ENCODE measurements at regions of chr7 and their contacts with region 1.

Region 1: GRCh38 chr7:128425850-128426249 is 16.1 kb upstream of the IMPDH1 start:
- DNase-seq: peak; percentile 32
- H3K4me3 ChIP-seq: no peak overlapping the region
- H3K27ac ChIP-seq: no peak overlapping the region
- H3K4me1 ChIP-seq: peaks cover 3% of the 10 kb centered on the region
- H3K27me3 ChIP-seq: no peaks in the 10 kb centered on the region
- CTCF ChIP-seq: peak; percentile 92 to 98

Region 2: GRCh38 chr7:128398016-128398840 is 27.6 kb before region 1 on chr7:
- CTCF ChIA-PET with region 1: interaction called, 5 read pairs
- dilution Hi-C with region 1: no loop called
- in situ Hi-C with region 1: no loop called
- intact Hi-C with region 1: loop called (anchors 1 kb)
- DNase-seq: no peak
- H3K4me3 ChIP-seq: no peak overlapping the region
- H3K27ac ChIP-seq: no peak overlapping the region
- H3K4me1 ChIP-seq: no peaks in the 10 kb centered on the region
- H3K27me3 ChIP-seq: no peaks in the 10 kb centered on the region
- CTCF ChIP-seq: peak; percentile 83 to 92